ENCODE measurements at regions of chr5 and their contacts with region 1.

Region 1: DNA sequence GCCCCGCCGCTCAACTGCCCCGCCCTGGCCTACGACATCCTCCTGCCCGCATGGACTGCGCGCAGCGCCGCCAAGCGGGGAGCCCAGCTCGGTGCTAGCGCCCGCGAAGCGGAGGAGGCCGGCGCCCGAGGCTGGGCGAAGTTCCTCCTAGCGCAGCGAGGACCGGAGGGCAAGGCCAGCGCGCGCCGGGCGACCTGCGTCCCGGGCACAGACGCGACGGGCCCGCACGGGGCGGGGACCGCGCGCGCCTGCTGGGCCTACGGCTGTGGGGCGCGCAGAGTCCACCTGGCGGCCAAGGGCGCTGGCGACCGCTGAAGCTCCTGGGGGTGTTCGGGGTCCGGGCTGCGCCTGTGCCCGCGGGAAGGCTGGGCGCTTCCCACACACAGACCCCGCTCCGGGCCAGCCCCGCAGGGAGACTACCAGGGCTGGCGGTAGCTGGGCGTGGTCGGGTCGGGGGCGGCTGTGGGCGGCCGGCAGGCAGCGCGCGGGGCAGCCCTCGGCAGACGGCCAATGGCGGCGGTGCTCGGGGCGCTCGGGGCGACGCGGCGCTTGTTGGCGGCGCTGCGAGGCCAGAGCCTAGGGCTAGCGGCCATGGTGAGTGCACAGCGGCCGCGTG is at the start of gene PCBD2:
- DNase-seq: peak; percentile 96
- total RNA-seq, gene PCBD2: 21.2 TPM

Region 2: GRCh38 chr5:134738133-134738962 is 166.4 kb before region 1 on chr5 and contains the start of gene CAMLG:
- intact Hi-C with region 1: loop called (anchors 1 kb)
- DNase-seq: peak; percentile 99
- total RNA-seq, gene CAMLG: 18.7 TPM

Region 3: DNA sequence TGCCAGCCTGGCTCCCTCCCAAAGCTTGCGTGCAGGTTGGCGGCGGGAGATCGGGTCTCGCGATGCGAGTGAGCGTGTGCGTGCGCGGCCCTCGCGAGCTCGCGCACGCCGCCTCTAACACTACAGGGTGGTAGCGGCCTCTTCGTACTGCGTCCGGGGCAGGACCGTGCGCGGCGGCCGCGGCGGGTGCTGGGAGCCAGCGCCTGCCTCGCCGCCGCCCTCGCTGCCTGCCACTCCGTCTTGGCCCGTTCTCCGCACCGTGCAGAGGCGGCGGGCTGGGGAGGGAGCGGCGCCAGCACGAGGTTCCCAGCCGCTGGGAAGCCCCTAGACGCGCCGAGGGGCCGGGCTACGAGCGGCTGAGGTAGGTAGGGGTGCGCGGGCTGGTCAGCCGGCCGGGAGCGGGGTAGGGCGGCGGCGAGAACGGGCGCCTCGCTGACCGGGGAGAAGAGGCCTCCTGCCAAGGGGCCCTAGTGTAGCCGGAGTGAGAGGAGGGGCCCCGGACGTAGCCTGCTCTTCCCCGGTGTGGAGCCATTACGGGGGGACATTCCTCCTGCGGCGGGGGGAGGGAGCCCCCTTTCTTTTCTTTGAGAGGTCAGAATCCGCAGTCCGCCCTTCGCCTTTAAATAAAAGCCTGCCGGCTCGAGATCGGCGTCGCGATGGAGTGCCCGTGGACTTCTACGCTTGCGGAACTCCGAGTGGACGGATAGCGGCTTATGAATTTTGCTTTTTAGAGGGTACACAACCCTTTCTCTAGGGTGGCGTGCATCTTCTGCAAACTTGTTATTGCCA is 58.7 kb before region 1 on chr5 and contains the start of gene C5orf24:
- intact Hi-C with region 1: loop called (anchors 1 kb)
- DNase-seq: peak; percentile 96
- total RNA-seq, gene C5orf24: 26.6 TPM

Region 4: DNA sequence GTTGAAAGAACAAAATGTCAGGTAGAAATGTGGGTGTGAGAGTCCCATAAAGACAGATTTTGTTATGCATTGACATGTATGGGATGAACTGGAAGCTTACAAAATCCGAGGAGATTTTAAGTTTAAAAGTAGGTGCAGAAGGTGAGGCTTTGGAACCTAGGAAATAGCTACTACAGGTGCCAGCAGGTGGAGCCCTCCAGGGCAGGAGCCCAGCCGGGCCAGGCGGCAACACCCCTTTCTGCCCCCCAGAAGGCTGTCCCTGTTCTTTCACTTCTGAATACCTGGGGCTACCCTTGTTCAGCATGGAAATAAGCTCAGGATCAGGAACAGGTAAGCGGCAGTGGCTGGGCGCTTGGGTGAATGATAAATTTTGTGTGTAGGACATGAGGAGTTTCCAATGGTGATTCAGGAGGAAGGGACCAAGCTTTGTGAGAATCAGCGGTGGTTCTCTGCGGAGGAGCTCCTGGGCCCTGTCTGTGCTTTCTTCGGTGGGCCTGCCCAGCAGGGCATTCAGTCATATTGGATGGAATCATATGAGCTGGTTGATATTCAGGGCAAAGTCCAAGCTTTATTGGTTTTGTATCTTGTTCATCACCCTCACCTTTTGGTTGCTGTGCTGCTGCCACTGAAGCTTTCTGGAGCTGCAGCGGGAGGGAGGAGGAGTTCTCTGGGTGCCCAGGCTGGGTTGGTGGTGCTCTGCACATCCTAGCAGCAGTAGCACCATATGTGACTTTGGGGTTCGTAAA is 12.5 kb after region 1 on chr5:
- intact Hi-C with region 1: no loop called
- DNase-seq: no peak

Region 5: GRCh38 chr5:134994560-134995156 is 89.9 kb after region 1 on chr5:
- intact Hi-C with region 1: no loop called
- DNase-seq: no peak

Region 6: GRCh38 chr5:135034236-135034962 is 129.7 kb after region 1 on chr5:
- intact Hi-C with region 1: no loop called
- DNase-seq: no peak

Region 7: DNA sequence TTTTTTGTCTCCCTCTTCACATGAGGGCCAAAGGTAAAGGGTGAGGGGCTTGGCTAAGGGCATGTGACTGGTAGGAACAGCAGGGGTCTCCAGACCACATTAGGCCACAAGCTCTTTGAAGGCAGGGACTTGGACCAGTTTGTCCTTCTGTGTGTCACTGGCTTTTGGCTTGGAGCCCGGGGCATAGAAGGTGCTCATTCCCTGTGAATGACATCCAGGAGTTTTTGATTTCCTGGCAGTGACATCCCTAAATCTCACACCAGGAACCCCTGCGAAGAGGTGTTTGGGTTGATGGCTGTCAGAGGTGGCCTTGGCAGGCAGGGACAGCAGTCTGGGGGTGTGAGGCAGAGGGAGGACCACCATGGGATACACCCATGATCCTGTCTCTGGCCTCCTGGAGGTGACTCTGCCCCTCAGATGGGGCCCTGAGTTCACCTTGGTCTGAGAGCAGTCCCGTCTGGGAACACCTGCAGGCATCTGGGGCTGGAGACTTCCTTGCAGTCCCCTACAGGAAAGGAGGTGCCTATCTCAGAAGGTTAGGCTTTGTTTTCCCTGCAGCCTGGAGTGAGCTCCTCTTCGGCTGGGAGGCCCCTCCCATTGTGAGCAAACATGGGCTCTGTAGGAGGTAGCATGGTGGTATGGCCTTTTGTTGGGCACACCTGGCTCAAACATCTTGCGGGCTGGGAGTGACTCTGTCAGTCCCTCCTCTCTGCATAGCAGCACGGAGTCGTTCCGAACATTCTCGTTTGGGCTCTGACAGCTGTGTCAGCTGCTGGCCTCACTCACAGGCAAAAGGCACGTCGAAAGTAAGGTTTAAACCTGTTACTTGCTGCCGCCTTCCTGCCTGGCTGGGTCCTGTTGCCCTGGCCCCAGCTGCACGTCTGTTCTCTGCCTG is 167.9 kb after region 1 on chr5:
- intact Hi-C with region 1: no loop called
- DNase-seq: peak; percentile 63